WTC11 (cell line): ENCODE measurements at regions of chr12 and their contacts with region 1.

Region 1: DNA sequence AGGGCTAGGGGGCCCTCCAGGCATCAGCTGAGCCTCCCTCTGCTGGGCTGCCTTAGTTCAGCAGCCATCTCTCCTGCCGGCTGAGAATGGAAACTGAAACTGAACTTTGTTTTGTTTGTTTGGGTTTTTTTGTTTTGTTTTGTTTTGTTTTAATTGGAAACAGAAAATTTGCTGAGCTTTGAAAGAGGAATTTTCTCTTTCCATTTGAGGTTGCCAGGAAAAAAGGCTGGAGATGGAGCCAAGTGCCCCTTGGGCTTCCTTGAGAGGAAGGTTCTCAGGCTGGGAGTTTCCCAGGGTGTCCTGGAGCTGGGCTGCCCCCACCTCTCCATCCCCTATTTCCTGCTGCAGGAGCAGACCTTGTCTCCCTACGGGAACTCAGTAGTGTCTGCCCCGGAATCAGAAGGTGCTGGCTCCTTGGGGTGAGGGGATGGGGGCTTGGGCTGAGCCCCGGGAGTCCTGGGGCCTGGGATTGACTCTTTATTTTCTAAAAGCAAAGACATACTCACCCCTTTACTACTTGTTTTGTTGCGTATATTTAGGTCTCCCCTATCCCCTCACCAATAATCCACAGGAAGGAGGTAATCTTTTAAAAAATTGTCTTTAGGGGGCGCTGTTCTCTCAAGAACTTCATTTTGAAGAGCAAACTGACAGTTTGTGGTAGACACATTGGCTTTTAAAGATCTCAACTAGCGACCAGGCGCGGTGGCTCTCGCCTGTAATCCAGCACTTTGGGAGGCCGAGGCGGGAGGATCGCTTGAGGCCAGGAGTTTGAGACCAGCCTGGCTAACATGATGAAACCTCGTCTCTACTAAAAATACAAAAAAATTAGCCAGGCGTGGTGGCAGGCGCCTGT is 21.3 kb upstream of the OASL start:
- DNase-seq: peak; percentile 48
- ATAC-seq: peak; percentile 92
- H3K4me3 Mint-ChIP-seq: peak overlapping the region; percentile 56
- H3K27ac Mint-ChIP-seq: peak overlapping the region; percentile 91
- H3K4me1 Mint-ChIP-seq: peaks cover 3% of the 10 kb centered on the region
- H3K27me3 Mint-ChIP-seq: peaks cover 4% of the 10 kb centered on the region; the same call in 1 of the 2 replicates
- CTCF ChIP-seq: peak; percentile 67

Region 2: DNA sequence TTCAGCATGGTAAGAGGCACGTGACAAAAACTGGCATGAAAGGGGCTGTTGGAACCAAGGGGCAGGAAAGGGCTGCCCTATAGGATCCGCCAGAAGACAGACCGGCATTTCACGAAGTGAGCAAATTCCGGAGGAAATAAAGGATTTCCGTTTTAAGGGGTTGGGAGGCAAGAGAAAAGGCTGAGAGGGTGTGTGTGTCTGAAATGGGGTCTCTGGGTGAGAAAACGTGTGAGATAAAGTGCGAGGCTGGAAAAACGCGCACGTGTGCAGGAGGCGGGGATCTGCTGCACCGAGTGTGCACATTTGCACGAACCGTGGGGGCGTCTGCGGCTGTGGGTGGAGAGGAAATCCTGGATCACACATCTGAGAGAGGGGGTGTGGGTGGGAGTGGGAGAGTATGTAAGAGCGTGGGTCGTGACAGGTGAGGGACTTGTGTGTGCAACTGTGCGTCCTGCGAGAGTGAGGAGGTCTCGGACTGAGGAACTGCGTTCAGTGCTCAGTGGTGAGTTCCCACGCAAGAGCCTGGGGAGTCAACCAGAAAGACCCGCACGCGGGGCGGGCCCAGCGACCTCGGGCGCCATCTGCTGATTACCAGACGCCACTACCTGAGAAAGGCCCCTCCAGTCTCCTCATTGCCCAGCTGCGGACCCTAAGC is 35.3 kb after region 1 on chr12:
- CTCF ChIA-PET with region 1: interaction called, 13 read pairs
- POLR2A ChIA-PET with region 1: no interaction called
- DNase-seq: peak; percentile 83
- ATAC-seq: peak; percentile 96
- H3K4me3 Mint-ChIP-seq: peak overlapping the region; percentile 62
- H3K27ac Mint-ChIP-seq: no peak overlapping the region
- H3K4me1 Mint-ChIP-seq: peaks cover 17% of the 10 kb centered on the region
- H3K27me3 Mint-ChIP-seq: peaks cover 29% of the 10 kb centered on the region
- CTCF ChIP-seq: peak; percentile 58